CD8-positive, alpha-beta T cell (primary cell): ENCODE measurements at regions of chr4 and their contacts with region 1.

Region 1: GRCh38 chr4:186587416-186588018 is 32.1 kb upstream of the MTNR1A start:
- DNase-seq: peak; percentile 3 to 66 (median 57)
- ATAC-seq: no peak
- H3K4me3 ChIP-seq: no peak overlapping the region
- H3K4me3 Mint-ChIP-seq: no peak overlapping the region
- H3K27ac ChIP-seq: no peak overlapping the region
- H3K27ac Mint-ChIP-seq: no peak overlapping the region
- H3K4me1 ChIP-seq: no peaks in the 10 kb centered on the region
- H3K4me1 Mint-ChIP-seq: no peaks in the 10 kb centered on the region
- H3K27me3 ChIP-seq: no peaks in the 10 kb centered on the region
- H3K27me3 Mint-ChIP-seq: no peaks in the 10 kb centered on the region
- CTCF ChIP-seq: peak; percentile 91

Region 2: GRCh38 chr4:185640811-185641675 is 946.5 kb before region 1 on chr4:
- CTCF ChIA-PET with region 1: no interaction called
- POLR2A ChIA-PET with region 1: no interaction called
- intact Hi-C with region 1: loop called (anchors 2 to 5 kb)
- DNase-seq: peak in 2 of 9 experiments; percentile 24 to 32
- ATAC-seq: no peak
- H3K4me3 ChIP-seq: no peak overlapping the region
- H3K4me3 Mint-ChIP-seq: no peak overlapping the region
- H3K27ac ChIP-seq: no peak overlapping the region
- H3K27ac Mint-ChIP-seq: no peak overlapping the region
- H3K4me1 ChIP-seq: no peaks in the 10 kb centered on the region
- H3K4me1 Mint-ChIP-seq: peaks cover 3% of the 10 kb centered on the region
- H3K27me3 ChIP-seq: peaks cover 0 to 3% of the 10 kb centered on the region in 2 experiments
- H3K27me3 Mint-ChIP-seq: peaks cover 29% of the 10 kb centered on the region
- CTCF ChIP-seq: no peak

Region 3: DNA sequence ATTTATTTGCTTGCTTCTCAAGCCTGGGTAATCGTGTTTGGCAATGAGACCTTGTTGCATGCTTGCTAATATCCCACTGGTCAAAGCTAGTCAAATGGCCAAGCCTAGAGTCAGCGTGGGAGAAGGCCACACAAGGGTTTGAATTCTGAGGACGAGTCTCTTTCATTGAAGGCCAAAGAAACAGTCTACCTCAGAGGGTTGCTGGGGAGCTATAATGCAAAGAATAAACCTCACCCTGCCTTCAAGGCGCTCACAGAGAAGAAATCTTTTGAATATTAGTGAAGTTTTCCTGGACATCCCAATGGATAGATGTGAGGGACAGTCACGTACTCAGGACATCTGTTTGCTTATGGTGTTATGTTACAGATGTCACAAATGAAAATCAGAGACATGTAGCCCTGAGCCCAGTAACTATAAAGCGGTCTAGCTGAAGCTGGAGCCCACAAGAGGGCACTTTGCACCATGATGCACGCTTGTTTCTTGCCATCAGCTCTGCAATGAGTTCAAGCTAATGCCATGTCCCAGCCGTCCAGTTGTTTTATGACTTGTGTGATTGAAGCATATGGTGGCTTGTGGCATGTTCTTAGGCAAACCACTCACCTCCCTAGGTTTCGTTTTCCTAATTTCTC is 519.6 kb before region 1 on chr4:
- CTCF ChIA-PET with region 1: interaction called, 30 read pairs
- POLR2A ChIA-PET with region 1: no interaction called
- intact Hi-C with region 1: loop called in 1 of 2 experiments (anchors 2 kb)
- DNase-seq: peak in 7 of 9 experiments; percentile 9 to 64 (median 27)
- ATAC-seq: peak; percentile 64
- H3K4me3 ChIP-seq: peak overlapping the region; percentile 46 to 69
- H3K4me3 Mint-ChIP-seq: peak overlapping the region; percentile 83
- H3K27ac ChIP-seq: no peak overlapping the region
- H3K27ac Mint-ChIP-seq: no peak overlapping the region
- H3K4me1 ChIP-seq: peaks cover 11% of the 10 kb centered on the region
- H3K4me1 Mint-ChIP-seq: peaks cover 25% of the 10 kb centered on the region
- H3K27me3 ChIP-seq: no peaks in the 10 kb centered on the region
- H3K27me3 Mint-ChIP-seq: peaks cover 11% of the 10 kb centered on the region
- CTCF ChIP-seq: no peak

Region 4: GRCh38 chr4:186297013-186297645 is 290.4 kb before region 1 on chr4:
- CTCF ChIA-PET with region 1: no interaction called
- POLR2A ChIA-PET with region 1: no interaction called
- intact Hi-C with region 1: loop called in 1 of 2 experiments (anchors 1 kb)
- DNase-seq: peak in 2 of 9 experiments; percentile 19 to 30
- ATAC-seq: no peak
- H3K4me3 ChIP-seq: no peak overlapping the region
- H3K4me3 Mint-ChIP-seq: no peak overlapping the region
- H3K27ac ChIP-seq: no peak overlapping the region
- H3K27ac Mint-ChIP-seq: no peak overlapping the region
- H3K4me1 ChIP-seq: no peaks in the 10 kb centered on the region
- H3K4me1 Mint-ChIP-seq: peaks cover 3% of the 10 kb centered on the region
- H3K27me3 ChIP-seq: peaks cover 0 to 12% of the 10 kb centered on the region in 2 experiments
- H3K27me3 Mint-ChIP-seq: peaks cover 45% of the 10 kb centered on the region
- CTCF ChIP-seq: peak; percentile 58

Region 5: GRCh38 chr4:186598686-186599085 is 11.2 kb after region 1 on chr4:
- CTCF ChIA-PET with region 1: interaction called, 10 read pairs
- POLR2A ChIA-PET with region 1: no interaction called
- intact Hi-C with region 1: no loop called
- DNase-seq: no peak
- ATAC-seq: no peak
- H3K4me3 ChIP-seq: no peak overlapping the region
- H3K4me3 Mint-ChIP-seq: no peak overlapping the region
- H3K27ac ChIP-seq: no peak overlapping the region
- H3K27ac Mint-ChIP-seq: no peak overlapping the region
- H3K4me1 ChIP-seq: no peaks in the 10 kb centered on the region
- H3K4me1 Mint-ChIP-seq: no peaks in the 10 kb centered on the region
- H3K27me3 ChIP-seq: no peaks in the 10 kb centered on the region
- H3K27me3 Mint-ChIP-seq: no peaks in the 10 kb centered on the region
- CTCF ChIP-seq: no peak